CD4-positive, alpha-beta memory T cell (primary cell): ENCODE measurements at regions of chr9 and their contacts with region 1.

Region 1: GRCh38 chr9:136482793-136483588 is at the start of gene SEC16A:
- DNase-seq: peak; percentile 98 to 99 (median 98)
- H3K4me3 ChIP-seq: peak within 1 kb of the TSS; percentile 85 to 87
- H3K4me3 Mint-ChIP-seq: peak within 1 kb of the TSS; percentile 89 to 99 (median 96)
- H3K27ac ChIP-seq: peak within 1 kb of the TSS; percentile 99
- H3K27ac Mint-ChIP-seq: peak within 1 kb of the TSS; percentile 97 to 100 (median 99)
- H3K4me1 ChIP-seq: peaks cover 42% of the 10 kb centered on the region
- H3K4me1 Mint-ChIP-seq: peaks cover 20 to 52% (median 33%) of the 10 kb centered on the region in 4 donors
- H3K27me3 ChIP-seq: no peaks in the 10 kb centered on the region
- H3K27me3 Mint-ChIP-seq: no peaks in the 10 kb centered on the region
- total RNA-seq, gene SEC16A: 82.9 to 87.7 TPM

Region 2: DNA sequence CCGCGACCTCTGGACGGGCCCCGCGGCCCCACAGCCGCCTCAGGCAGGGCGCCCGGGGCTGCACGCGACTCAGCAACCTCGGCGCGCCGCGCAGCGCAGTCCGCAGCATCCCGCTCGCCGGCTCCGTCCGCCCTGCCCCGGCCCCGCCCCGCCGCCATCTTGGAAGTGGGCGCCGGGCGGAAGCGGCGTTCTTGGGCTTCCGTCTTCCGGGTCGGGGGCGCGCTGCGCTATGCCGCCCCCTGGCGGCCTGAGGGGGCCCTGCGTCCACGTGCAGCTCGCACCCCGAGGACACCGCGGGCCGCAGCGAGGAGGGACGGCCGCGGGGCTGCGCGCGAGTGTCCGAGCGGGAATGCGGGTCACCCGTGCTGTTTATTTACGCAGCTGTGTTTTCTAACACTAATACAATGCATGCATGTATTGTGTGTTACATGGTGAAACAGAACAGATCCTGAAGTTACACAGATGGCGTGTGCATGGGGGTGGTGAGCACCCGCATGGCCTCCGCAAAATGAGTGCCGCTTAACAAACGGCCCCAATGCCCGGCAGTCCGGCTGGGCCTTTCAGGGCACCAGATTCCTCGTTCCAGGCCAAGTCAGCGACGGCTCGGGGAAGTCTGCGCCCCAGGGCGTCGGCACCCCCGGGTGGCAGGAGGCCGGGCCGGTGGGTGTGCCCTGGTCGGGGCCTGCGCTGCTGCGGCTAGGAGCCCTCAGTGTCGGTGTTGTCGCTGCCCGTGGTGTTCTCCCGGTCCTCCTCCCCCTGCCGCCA is 119.2 kb before region 1 on chr9 and contains the start of gene DNLZ:
- CTCF ChIA-PET with region 1: no interaction called
- POLR2A ChIA-PET with region 1: no interaction called
- intact Hi-C with region 1: loop called (anchors 1 kb)
- DNase-seq: peak; percentile 81 to 90 (median 88)
- H3K4me3 ChIP-seq: peak within 1 kb of the TSS in 1 of 2 donors; percentile 59
- H3K4me3 Mint-ChIP-seq: peak within 1 kb of the TSS; percentile 83 to 91 (median 86)
- H3K27ac ChIP-seq: peak within 1 kb of the TSS; percentile 76
- H3K27ac Mint-ChIP-seq: peak within 1 kb of the TSS; percentile 78 to 92 (median 85)
- H3K4me1 ChIP-seq: peaks cover 14% of the 10 kb centered on the region
- H3K4me1 Mint-ChIP-seq: peaks cover 0 to 9% (median 0%) of the 10 kb centered on the region in 4 donors
- H3K27me3 ChIP-seq: no peaks in the 10 kb centered on the region
- H3K27me3 Mint-ChIP-seq: no peaks in the 10 kb centered on the region
- total RNA-seq, gene DNLZ: 26.0 to 32.3 TPM

Region 3: GRCh38 chr9:136439550-136440408 is 43.2 kb before region 1 on chr9 and contains the start of gene INPP5E:
- CTCF ChIA-PET with region 1: interaction called, 5 read pairs
- POLR2A ChIA-PET with region 1: interaction called, 4 read pairs
- intact Hi-C with region 1: loop called (anchors 1 kb)
- DNase-seq: peak; percentile 69 to 89 (median 83)
- H3K4me3 ChIP-seq: peak within 1 kb of the TSS in 1 of 2 donors; percentile 66
- H3K4me3 Mint-ChIP-seq: peak within 1 kb of the TSS; percentile 86 to 91 (median 88)
- H3K27ac ChIP-seq: peak within 1 kb of the TSS; percentile 74
- H3K27ac Mint-ChIP-seq: peak within 1 kb of the TSS in 6 of 7 donors; percentile 66 to 95 (median 91)
- H3K4me1 ChIP-seq: peaks cover 29% of the 10 kb centered on the region
- H3K4me1 Mint-ChIP-seq: peaks cover 16 to 36% (median 25%) of the 10 kb centered on the region in 4 donors
- H3K27me3 ChIP-seq: no peaks in the 10 kb centered on the region
- H3K27me3 Mint-ChIP-seq: no peaks in the 10 kb centered on the region
- total RNA-seq, gene INPP5E: 29.1 to 31.2 TPM

Region 4: GRCh38 chr9:136512651-136513071 is 29.7 kb after region 1 on chr9:
- CTCF ChIA-PET with region 1: no interaction called
- POLR2A ChIA-PET with region 1: no interaction called
- intact Hi-C with region 1: no loop called
- DNase-seq: peak in 1 of 5 donors; percentile 20
- H3K4me3 ChIP-seq: no peak overlapping the region
- H3K4me3 Mint-ChIP-seq: no peak overlapping the region
- H3K27ac ChIP-seq: no peak overlapping the region
- H3K27ac Mint-ChIP-seq: peak overlapping the region in 1 of 7 donors; percentile 35
- H3K4me1 ChIP-seq: no peaks in the 10 kb centered on the region
- H3K4me1 Mint-ChIP-seq: no peaks in the 10 kb centered on the region
- H3K27me3 ChIP-seq: no peaks in the 10 kb centered on the region
- H3K27me3 Mint-ChIP-seq: no peaks in the 10 kb centered on the region

Region 5: GRCh38 chr9:136545966-136546698 is 63.1 kb after region 1 on chr9 and contains the start of gene NOTCH1:
- CTCF ChIA-PET with region 1: interaction called, 58 read pairs
- POLR2A ChIA-PET with region 1: interaction called, 3 read pairs
- intact Hi-C with region 1: loop called (anchors 2 kb)
- DNase-seq: peak; percentile 84 to 87 (median 85)
- H3K4me3 ChIP-seq: peak within 1 kb of the TSS; percentile 38 to 77
- H3K4me3 Mint-ChIP-seq: peak within 1 kb of the TSS; percentile 85 to 90 (median 88)
- H3K27ac ChIP-seq: peak within 1 kb of the TSS; percentile 60
- H3K27ac Mint-ChIP-seq: peak within 1 kb of the TSS; percentile 64 to 94 (median 86)
- H3K4me1 ChIP-seq: peaks cover 38% of the 10 kb centered on the region
- H3K4me1 Mint-ChIP-seq: peaks cover 5 to 32% (median 21%) of the 10 kb centered on the region in 4 donors
- H3K27me3 ChIP-seq: no peaks in the 10 kb centered on the region
- H3K27me3 Mint-ChIP-seq: no peaks in the 10 kb centered on the region
- total RNA-seq, gene NOTCH1: 43.0 to 45.4 TPM

Region 6: GRCh38 chr9:136728080-136728547 is 245.1 kb after region 1 on chr9:
- CTCF ChIA-PET with region 1: interaction called, 5 read pairs
- POLR2A ChIA-PET with region 1: interaction called, 14 read pairs
- intact Hi-C with region 1: loop called (anchors 2 kb)
- DNase-seq: peak; percentile 85 to 92 (median 91)
- H3K4me3 ChIP-seq: peak overlapping the region; percentile 88 to 94
- H3K4me3 Mint-ChIP-seq: peak overlapping the region; percentile 48 to 97 (median 76)
- H3K27ac ChIP-seq: peak overlapping the region; percentile 72
- H3K27ac Mint-ChIP-seq: peak overlapping the region in 2 of 7 donors; percentile 51 to 97
- H3K4me1 ChIP-seq: peaks cover 30% of the 10 kb centered on the region
- H3K4me1 Mint-ChIP-seq: peaks cover 7 to 42% (median 22%) of the 10 kb centered on the region in 4 donors
- H3K27me3 ChIP-seq: no peaks in the 10 kb centered on the region
- H3K27me3 Mint-ChIP-seq: peaks cover 0 to 4% of the 10 kb centered on the region in 2 donors